Dendritic cell treated with granulocyte-macrophage colony-stimulating factor and Interleukin-4, amounts not matched to agents 40 ng/mL and 50 ng/mL, for 4 days (primary cell): ENCODE measurements at regions of chr22 and their contacts with region 1.

Region 1: GRCh38 chr22:19122143-19122751 is at the start of gene DGCR2:
- H3K4me3 Mint-ChIP-seq: peak within 1 kb of the TSS; percentile 89
- H3K27ac Mint-ChIP-seq: peak within 1 kb of the TSS; percentile 85
- H3K4me1 Mint-ChIP-seq: peaks cover 53% of the 10 kb centered on the region
- H3K27me3 Mint-ChIP-seq: peaks cover 2% of the 10 kb centered on the region

Region 2: DNA sequence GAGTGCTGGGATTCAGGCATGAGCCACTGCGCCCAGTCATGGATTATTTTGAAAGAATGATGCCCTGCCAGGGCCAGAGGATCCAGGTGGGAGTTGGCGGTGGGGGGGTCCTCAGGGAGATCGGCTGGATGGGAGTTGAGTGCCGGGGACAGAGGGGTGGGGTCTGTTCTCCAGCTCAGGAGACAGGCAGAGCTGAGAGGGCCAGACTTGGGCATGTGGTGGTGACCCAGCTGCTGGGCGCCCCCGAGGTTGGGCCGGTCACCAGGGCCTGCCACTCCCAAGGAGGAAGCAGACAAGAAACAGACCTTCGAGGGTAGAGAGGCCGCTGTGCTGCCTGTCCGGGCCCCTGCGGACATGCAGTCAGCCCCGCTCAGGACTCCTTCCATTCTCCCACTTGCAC is 174.3 kb before region 1 on chr22:
- intact Hi-C with region 1: no loop called
- H3K4me3 Mint-ChIP-seq: no peak overlapping the region
- H3K27ac Mint-ChIP-seq: no peak overlapping the region
- H3K4me1 Mint-ChIP-seq: no peaks in the 10 kb centered on the region
- H3K27me3 Mint-ChIP-seq: peaks cover 10% of the 10 kb centered on the region

Region 3: DNA sequence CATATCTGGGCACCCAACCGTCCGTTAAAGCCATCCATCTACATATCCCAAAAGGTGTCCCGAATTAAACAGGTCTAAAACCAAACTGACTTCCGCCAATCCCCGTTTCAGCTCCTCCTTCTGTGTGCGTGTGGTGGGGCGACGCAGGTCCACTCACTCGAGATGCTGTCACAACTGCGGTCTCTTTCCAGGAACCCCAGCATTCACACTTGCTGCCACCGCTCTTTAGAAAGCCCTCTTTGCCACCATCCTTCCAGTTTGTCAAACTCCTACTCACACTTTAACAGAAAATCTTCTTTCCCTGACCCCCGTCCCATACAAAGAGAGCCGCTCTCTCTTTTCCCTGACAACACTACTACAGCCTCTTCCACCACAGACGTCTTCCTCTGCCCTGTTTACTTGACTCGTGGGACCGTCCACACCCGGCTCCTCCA is 21.7 kb after region 1 on chr22:
- intact Hi-C with region 1: loop called (anchors 1 kb)
- H3K4me3 Mint-ChIP-seq: peak overlapping the region; percentile 100
- H3K27ac Mint-ChIP-seq: peak overlapping the region; percentile 94
- H3K4me1 Mint-ChIP-seq: peaks cover 14% of the 10 kb centered on the region
- H3K27me3 Mint-ChIP-seq: peaks cover 30% of the 10 kb centered on the region

Region 4: GRCh38 chr22:19350947-19351346 is 228.7 kb after region 1 on chr22:
- intact Hi-C with region 1: no loop called
- H3K4me3 Mint-ChIP-seq: no peak overlapping the region
- H3K27ac Mint-ChIP-seq: no peak overlapping the region
- H3K4me1 Mint-ChIP-seq: no peaks in the 10 kb centered on the region
- H3K27me3 Mint-ChIP-seq: no peaks in the 10 kb centered on the region